ENCODE measurements at regions of chr3 and their contacts with region 1.

Region 1: GRCh38 chr3:51498876-51499738 is 708 bp downstream of the DCAF1 start:
- DNase-seq: peak; percentile 90
- CTCF ChIP-seq: no peak

Region 2: GRCh38 chr3:51221959-51222358 is 277.1 kb before region 1 on chr3:
- CTCF ChIA-PET with region 1: no interaction called
- POLR2A ChIA-PET with region 1: no interaction called
- DNase-seq: no peak
- CTCF ChIP-seq: no peak

Region 3: DNA sequence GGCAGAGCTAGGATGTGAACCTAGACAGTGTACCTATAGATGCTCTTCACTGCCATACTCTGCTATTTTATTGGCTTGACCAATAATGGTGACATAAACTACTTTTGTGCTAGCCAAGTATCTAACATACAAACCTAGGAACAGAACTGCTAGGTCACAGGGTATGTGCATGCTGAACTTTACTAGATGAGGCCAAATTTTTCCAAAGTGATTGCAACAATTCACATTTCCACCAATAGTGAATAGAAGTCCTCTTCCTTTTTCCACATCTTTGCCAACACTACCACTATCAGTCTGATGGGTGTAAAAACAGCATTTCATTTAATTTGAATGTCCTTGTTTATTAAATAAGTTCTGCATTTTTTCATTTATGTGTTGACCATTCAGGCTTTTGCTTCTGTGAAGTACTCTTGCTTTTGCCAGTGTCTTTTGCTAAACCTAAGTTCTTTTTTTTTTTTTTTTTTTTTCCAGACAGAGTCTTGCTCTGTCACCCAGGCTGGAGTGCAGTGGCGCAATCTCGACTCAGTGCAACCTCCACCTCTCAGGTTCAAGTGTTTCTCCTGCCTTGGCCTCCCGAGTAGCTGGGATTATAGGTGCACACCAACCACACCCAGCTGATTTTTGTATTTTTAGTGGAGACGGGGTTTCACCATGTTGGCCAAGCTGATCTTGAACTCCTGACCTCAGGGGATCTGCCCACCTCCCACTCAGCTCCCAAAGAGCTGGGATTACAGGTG is 53.4 kb before region 1 on chr3:
- CTCF ChIA-PET with region 1: no interaction called
- POLR2A ChIA-PET with region 1: interaction called, 10 read pairs
- DNase-seq: no peak
- CTCF ChIP-seq: no peak

Region 4: DNA sequence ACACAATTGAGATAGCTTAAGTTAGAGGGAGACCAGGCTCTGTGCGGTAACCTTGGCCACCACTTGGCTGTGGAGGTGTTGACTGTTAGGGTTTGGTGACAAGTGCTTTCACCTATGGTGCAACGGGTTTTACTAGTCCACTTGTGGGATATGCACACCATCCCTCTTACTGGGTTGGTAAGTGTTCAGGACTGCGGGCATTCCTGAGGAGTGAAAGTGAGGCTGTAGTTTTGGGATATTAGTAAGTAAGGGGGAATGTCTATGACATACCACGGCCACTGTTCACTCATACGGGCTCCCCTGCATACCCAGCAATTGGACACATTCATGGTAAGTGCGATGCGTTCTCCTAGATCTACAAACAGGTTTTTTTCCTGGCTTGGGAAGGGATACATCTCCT is 31.4 kb after region 1 on chr3:
- CTCF ChIA-PET with region 1: interaction called, 58 read pairs
- POLR2A ChIA-PET with region 1: no interaction called
- DNase-seq: no peak
- CTCF ChIP-seq: no peak

Region 5: GRCh38 chr3:51637941-51638471 is 138.9 kb after region 1 on chr3:
- CTCF ChIA-PET with region 1: interaction called, 49 read pairs
- POLR2A ChIA-PET with region 1: no interaction called
- DNase-seq: peak; percentile 67
- CTCF ChIP-seq: peak; percentile 80

Region 6: DNA sequence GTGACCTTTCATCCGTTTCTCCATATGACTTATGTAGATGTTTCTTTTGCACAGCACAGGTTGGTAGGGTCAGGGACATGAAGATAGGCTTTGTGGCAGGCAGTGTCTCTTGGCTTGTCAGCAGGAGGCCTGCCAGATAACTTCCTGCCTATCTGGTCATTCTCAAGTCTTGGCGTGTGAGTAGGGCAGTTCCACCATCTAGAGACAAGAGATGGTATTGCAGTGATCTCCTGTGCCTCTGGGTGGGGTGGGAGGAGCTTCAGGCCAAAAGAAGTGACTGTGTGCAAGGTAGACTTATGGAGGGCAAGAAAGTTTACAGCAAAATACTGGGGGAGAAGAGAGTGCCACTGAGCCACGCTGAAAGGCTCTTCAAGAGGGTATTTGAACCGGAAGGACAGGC is 183.0 kb after region 1 on chr3:
- CTCF ChIA-PET with region 1: interaction called, 477 read pairs
- POLR2A ChIA-PET with region 1: interaction called, 9 read pairs
- DNase-seq: peak; percentile 89
- CTCF ChIP-seq: peak; percentile 78

Region 7: DNA sequence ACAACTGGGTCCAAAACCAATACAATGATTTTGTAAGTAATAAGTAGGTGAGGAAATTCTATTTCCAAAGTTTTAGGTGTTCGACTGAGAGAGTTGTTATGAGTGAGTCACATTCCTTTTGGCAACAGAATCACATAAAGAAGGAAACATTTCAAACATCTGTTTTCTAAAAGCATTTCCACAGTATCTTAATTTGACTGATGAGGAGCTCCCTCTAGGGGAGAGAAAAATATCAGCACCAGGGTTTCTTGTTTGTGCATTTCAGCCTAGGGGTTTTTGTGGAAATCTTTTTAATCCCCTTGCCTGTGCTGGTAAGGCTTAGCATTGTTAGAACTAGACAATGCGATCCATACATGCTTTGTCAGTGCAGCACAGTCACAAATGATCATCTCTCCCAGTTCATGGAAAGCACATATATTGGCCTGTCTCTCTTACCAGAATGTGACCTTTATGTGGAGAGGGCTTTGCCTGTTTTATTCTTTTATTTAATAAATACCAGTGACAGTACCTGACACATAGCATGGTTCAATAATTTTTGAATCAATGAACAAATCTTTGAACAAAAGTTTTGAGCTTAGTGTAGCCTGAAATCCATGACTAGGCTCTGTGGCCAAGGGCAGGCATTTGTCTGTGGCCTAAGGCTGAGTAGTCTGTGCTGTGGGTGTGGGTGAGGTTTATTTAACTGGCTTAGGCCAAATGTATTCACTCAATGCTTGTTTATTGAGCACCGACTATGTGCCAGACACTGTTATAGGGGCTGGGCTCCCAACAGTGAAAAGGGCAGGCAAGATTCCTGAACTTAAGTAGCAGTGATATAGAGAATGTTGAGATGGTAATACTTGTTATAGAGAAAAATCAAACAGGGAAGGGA is 301.0 kb after region 1 on chr3:
- CTCF ChIA-PET with region 1: interaction called, 15 read pairs
- POLR2A ChIA-PET with region 1: no interaction called
- DNase-seq: peak; percentile 46
- CTCF ChIP-seq: peak; percentile 81

Region 8: DNA sequence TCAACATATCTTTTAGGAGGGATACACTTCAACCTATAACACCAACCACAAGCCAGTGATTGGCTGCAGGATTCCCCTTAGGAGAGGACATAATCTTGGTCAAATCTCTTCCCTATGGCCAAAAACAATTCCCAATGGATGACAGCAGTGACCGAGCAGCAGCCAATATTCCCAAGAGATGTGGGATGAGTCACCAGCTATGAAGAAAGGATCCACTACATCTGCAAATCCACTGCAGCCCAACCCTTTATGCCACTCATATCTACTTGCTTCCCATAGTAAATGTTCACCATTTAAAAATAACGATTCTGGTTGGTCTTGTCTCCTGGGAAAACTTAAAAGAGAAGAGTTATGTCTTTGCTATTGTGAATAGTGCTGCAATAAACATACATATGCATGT is 380.8 kb after region 1 on chr3:
- CTCF ChIA-PET with region 1: no interaction called
- POLR2A ChIA-PET with region 1: no interaction called
- DNase-seq: no peak
- CTCF ChIP-seq: no peak